A673 (cell line): ENCODE measurements at regions of chr10 and their contacts with region 1.

Region 1: DNA sequence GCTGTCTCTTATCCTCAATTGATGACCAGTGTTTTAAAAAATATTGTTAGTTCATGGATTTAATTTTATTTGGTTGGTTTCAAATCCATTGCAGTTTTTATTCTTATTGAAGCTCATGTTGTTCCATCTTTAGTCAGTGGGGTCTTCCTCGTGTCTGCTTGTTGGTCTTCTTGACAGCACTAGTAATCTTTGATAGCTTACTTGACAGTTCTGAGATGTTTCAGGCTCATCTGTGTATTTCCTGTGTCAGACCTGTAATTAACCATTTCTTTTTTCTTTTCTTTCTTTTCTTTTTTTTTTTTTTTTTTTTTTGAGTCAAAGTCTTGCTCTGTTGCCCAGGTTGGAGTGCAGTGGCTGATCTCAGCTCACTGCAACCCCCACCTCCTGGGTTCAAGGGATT is 28.2 kb downstream of the SLK start:
- DNase-seq: no peak
- H3K4me3 ChIP-seq: no peak overlapping the region
- H3K27ac ChIP-seq: no peak overlapping the region
- H3K4me1 ChIP-seq: no peaks in the 10 kb centered on the region
- H3K27me3 ChIP-seq: no peaks in the 10 kb centered on the region
- CTCF ChIP-seq: no peak

Region 2: GRCh38 chr10:103926722-103927319 is 68.3 kb before region 1 on chr10:
- CTCF ChIA-PET with region 1: interaction called, 10 read pairs
- POLR2A ChIA-PET with region 1: no interaction called
- intact Hi-C with region 1: no loop called
- DNase-seq: no peak
- H3K4me3 ChIP-seq: no peak overlapping the region
- H3K27ac ChIP-seq: no peak overlapping the region
- H3K4me1 ChIP-seq: no peaks in the 10 kb centered on the region
- H3K27me3 ChIP-seq: no peaks in the 10 kb centered on the region
- CTCF ChIP-seq: no peak

Region 3: GRCh38 chr10:104509981-104510380 is 514.8 kb after region 1 on chr10:
- CTCF ChIA-PET with region 1: interaction called, 12 read pairs
- POLR2A ChIA-PET with region 1: no interaction called
- intact Hi-C with region 1: no loop called
- DNase-seq: no peak
- H3K4me3 ChIP-seq: no peak overlapping the region
- H3K27ac ChIP-seq: no peak overlapping the region
- H3K4me1 ChIP-seq: no peaks in the 10 kb centered on the region
- H3K27me3 ChIP-seq: peaks cover 61% of the 10 kb centered on the region
- CTCF ChIP-seq: no peak